Endothelial cell of umbilical vein (primary cell): ENCODE measurements at regions of chr15 and their contacts with region 1.

Region 1: GRCh38 chr15:75625542-75626347 is at the start of gene SNUPN:
- DNase-seq: peak; percentile 89
- H3K4me3 ChIP-seq: peak within 1 kb of the TSS; percentile 53 to 78 (median 59)
- H3K27ac ChIP-seq: peak within 1 kb of the TSS; percentile 67
- H3K4me1 ChIP-seq: peaks cover 14% of the 10 kb centered on the region
- H3K27me3 ChIP-seq: no peaks in the 10 kb centered on the region
- CTCF ChIP-seq: no peak
- POLR2A ChIP-seq: peak; percentile 86
- total RNA-seq, gene SNUPN: 19.3 and 25.1 TPM in 2 replicates

Region 2: GRCh38 chr15:75023181-75023871 is 602.4 kb before region 1 on chr15 and contains the start of gene PPCDC:
- CTCF ChIA-PET with region 1: no interaction called
- POLR2A ChIA-PET with region 1: no interaction called
- dilution Hi-C with region 1: no loop called
- intact Hi-C with region 1: loop called (anchors 5 kb)
- DNase-seq: peak; percentile 96
- H3K4me3 ChIP-seq: peak within 1 kb of the TSS; percentile 62 to 88 (median 81)
- H3K27ac ChIP-seq: peak within 1 kb of the TSS; percentile 80
- H3K4me1 ChIP-seq: no peaks in the 10 kb centered on the region
- H3K27me3 ChIP-seq: no peaks in the 10 kb centered on the region
- CTCF ChIP-seq: no peak
- POLR2A ChIP-seq: peak; percentile 97
- total RNA-seq, gene PPCDC: 14.5 and 16.8 TPM in 2 replicates

Region 3: GRCh38 chr15:75453703-75454470 is 171.9 kb before region 1 on chr15:
- CTCF ChIA-PET with region 1: interaction called, 6 read pairs
- POLR2A ChIA-PET with region 1: no interaction called
- dilution Hi-C with region 1: no loop called
- intact Hi-C with region 1: loop called (anchors 1 kb)
- DNase-seq: peak; percentile 100
- H3K4me3 ChIP-seq: peak overlapping the region; percentile 61 to 93 (median 84)
- H3K27ac ChIP-seq: peak overlapping the region; percentile 78
- H3K4me1 ChIP-seq: peaks cover 29% of the 10 kb centered on the region
- H3K27me3 ChIP-seq: no peaks in the 10 kb centered on the region
- CTCF ChIP-seq: no peak
- POLR2A ChIP-seq: peak; percentile 52

Region 4: DNA sequence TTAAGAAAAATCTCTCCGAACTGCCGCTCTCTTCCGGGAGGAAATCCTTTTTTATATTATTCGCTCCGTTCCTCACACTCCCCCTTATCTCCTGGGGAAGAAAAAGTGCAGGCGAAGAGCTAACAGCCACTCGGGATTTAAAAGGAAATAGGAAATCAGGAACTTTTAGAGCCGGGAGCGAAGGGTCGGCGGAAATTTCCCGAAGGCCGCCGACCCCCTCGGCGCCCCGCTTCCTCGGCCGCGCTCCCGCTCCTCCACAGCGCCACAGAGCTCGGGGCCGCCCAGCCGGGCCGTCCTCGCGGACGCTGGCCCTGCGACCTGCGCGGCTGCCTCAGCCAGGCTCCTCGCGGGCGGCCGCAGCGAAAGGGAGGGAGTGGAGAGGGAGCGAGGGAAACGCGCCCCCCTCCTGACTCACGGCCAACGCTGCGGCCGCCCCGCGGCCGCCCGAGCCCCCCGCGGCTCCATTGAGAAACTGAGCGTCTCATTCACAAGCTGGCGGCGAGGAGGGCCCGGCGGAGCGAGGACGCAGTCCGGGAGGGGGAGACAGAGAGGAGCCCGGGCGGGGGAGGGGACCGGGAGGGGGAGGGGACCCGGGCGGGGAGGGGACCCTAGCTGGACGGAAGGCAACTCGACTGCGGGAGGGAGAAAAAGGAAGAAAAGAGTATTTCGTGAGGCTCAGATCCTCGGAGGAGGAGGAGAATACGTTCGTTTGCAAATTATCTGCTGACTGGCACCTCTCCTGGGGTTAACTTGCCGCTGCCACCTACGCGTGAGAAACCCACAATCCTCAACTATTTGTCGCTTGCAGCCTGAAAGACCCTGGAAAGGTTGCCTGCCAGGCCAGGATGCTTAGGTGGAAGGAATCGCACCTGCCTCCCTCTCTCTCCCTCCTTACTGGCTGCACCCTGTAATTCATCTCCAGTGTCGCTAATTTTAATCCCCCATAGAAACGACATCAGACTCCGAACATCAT is 46.5 kb before region 1 on chr15 and contains the start of gene PTPN9:
- CTCF ChIA-PET with region 1: interaction called, 6 read pairs
- POLR2A ChIA-PET with region 1: no interaction called
- dilution Hi-C with region 1: no loop called
- intact Hi-C with region 1: loop called (anchors 1 kb)
- DNase-seq: peak; percentile 73
- H3K4me3 ChIP-seq: peak within 1 kb of the TSS; percentile 64 to 99 (median 97)
- H3K27ac ChIP-seq: peak within 1 kb of the TSS; percentile 68
- H3K4me1 ChIP-seq: peaks cover 11% of the 10 kb centered on the region
- H3K27me3 ChIP-seq: no peaks in the 10 kb centered on the region
- CTCF ChIP-seq: peak; percentile 16 to 54
- POLR2A ChIP-seq: peak; percentile 34
- total RNA-seq, gene PTPN9: 31.4 and 32.0 TPM in 2 replicates

Region 5: DNA sequence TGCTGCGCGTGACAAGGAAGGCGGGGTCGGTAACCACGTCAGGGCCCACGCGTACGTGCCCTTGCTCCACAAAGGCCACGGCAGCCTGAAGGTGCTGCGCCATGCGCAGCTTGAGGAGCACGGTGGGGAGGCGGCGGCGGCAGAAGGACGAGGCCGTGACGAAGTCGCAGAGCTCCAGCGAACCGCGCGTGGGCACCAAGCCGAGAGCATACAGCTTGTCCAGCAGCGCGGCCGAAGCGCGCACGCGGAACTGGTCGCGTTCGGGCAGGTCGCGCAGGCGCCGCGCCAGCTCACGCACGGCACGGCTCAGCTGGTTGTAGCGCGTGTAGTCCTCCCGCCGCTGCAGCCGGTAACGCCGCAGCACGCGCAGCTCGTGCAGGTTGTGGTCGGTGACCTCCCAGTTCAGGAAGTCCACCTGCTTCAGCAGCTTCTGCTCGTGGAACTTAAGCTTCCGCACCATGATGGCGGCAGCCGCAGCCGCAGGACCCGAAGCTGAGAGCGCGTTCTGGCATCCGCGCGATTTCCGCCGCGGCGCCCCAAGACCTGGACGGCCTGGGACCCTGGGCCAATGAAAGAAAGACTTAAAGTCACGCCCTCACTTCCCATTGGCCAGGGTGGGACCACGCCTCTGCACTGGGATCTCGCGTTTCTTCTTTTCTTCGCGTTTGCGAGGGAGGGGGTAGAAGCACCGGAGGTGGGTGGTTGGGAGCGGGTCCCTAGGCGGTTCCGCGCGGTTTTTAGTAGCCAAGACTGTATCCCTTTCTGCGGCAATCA is 14.2 kb after region 1 on chr15 and contains the start of gene IMP3:
- CTCF ChIA-PET with region 1: interaction called, 32 read pairs
- POLR2A ChIA-PET with region 1: interaction called, 6 read pairs
- dilution Hi-C with region 1: no loop called
- intact Hi-C with region 1: loop called (anchors 1 kb)
- DNase-seq: peak; percentile 97
- H3K4me3 ChIP-seq: peak within 1 kb of the TSS; percentile 26 to 68 (median 60)
- H3K27ac ChIP-seq: peak within 1 kb of the TSS; percentile 31
- H3K4me1 ChIP-seq: peaks cover 23% of the 10 kb centered on the region
- H3K27me3 ChIP-seq: no peaks in the 10 kb centered on the region
- CTCF ChIP-seq: no peak
- POLR2A ChIP-seq: peak; percentile 97
- total RNA-seq, gene IMP3: 35.5 and 41.3 TPM in 2 replicates

Region 6: DNA sequence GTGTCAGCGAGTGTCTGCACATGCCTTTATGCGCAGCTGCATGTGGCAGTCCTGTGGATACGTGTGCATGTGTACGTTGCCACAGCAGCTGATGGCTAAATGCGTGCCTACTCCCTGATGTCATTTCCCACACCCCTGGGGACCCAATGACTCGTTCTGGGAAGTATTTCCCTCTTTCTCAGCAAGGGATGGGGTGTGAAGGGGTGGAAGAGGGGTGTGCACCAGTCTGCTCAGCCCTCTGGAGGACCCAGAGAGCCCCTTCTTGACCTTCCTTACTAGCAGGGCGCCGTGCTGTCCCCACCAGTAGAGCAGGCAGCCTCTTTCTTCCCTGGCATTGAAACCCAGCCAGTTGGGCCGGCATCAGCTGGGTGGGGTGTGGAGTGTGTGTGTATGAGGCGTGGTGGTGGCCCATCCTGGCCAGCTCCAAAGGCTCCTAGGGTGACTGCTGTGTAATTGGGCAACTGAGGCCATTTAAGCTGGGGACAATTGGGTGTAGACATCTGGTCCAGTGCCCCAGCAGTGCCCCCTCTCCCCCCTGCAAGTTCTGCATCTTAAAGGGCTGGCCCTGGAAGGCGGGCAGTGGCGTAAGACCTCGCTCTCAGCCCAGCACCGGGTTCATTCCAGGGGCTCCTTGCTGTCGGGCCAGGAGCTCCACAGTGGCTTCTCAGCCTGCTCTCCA is 41.2 kb after region 1 on chr15:
- CTCF ChIA-PET with region 1: no interaction called
- POLR2A ChIA-PET with region 1: no interaction called
- dilution Hi-C with region 1: no loop called
- intact Hi-C with region 1: loop called (anchors 1 kb)
- DNase-seq: peak; percentile 85
- H3K4me3 ChIP-seq: no peak overlapping the region
- H3K27ac ChIP-seq: peak overlapping the region; percentile 50
- H3K4me1 ChIP-seq: peaks cover 10% of the 10 kb centered on the region
- H3K27me3 ChIP-seq: no peaks in the 10 kb centered on the region
- CTCF ChIP-seq: no peak
- POLR2A ChIP-seq: no peak

Region 7: DNA sequence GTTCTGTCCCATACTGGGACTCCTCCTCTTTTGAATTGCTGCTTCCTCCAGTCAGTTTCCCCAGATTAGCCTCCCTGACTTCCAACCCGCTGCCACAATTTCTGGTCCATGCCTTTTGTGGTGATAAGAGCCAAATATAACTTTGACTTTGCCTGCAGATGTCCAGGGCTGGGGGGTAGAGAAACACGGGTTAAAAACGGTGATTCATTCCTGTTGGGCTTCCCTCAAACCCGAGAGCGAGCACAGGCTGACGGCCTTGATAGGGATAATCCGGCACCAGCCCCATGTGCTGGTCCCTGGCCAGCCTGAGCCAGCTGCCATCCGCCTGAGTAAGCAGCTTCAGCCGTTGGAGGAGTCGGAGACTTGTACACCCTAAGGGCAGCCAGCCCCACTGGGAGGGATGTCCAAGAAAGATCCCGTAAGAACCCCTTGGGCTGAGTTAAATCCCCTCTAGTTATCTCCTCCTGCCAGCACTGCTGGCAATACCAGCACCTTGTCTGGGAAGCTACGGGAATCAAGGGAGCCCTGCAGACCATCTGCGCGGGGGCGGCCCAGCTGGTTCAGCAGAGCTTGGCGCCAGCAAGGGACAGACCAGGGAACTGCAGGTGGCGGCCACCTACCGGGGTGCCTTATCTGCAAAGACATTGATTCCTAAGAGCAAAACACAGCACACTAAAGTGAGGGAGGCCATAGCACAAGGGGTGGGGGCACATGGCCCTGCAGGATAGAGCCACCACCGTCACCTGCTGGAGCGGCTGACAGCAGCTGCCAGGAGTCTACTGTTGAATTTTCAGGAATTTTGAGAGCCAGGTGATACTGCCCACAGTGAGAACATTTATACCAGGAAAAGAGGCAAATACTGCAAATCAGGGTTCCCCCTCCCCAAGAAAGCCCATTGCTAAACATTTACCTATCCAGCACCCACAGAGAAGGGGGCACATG is 68.8 kb after region 1 on chr15:
- CTCF ChIA-PET with region 1: no interaction called
- POLR2A ChIA-PET with region 1: no interaction called
- dilution Hi-C with region 1: no loop called
- intact Hi-C with region 1: no loop called
- DNase-seq: peak; percentile 81
- H3K4me3 ChIP-seq: no peak overlapping the region
- H3K27ac ChIP-seq: no peak overlapping the region
- H3K4me1 ChIP-seq: peaks cover 16% of the 10 kb centered on the region
- H3K27me3 ChIP-seq: peaks cover 42 to 48% of the 10 kb centered on the region in 2 experiments
- CTCF ChIP-seq: peak in 1 of 2 donors; percentile 14
- POLR2A ChIP-seq: no peak